CD4-positive, alpha-beta memory T cell (primary cell): ENCODE measurements at regions of chr14 and their contacts with region 1.

Region 1: GRCh38 chr14:24195191-24196070 is at the start of gene TM9SF1:
- DNase-seq: peak; percentile 89 to 92 (median 92)
- H3K4me3 ChIP-seq: peak within 1 kb of the TSS; percentile 87 to 90
- H3K4me3 Mint-ChIP-seq: peak within 1 kb of the TSS; percentile 93 to 98 (median 94)
- H3K27ac ChIP-seq: peak within 1 kb of the TSS; percentile 98
- H3K27ac Mint-ChIP-seq: peak within 1 kb of the TSS; percentile 92 to 99 (median 98)
- H3K4me1 ChIP-seq: peaks cover 37% of the 10 kb centered on the region
- H3K4me1 Mint-ChIP-seq: peaks cover 31 to 65% (median 48%) of the 10 kb centered on the region in 4 donors
- H3K27me3 ChIP-seq: no peaks in the 10 kb centered on the region
- H3K27me3 Mint-ChIP-seq: no peaks in the 10 kb centered on the region
- total RNA-seq, gene TM9SF1: 24.1 to 26.3 TPM

Region 2: DNA sequence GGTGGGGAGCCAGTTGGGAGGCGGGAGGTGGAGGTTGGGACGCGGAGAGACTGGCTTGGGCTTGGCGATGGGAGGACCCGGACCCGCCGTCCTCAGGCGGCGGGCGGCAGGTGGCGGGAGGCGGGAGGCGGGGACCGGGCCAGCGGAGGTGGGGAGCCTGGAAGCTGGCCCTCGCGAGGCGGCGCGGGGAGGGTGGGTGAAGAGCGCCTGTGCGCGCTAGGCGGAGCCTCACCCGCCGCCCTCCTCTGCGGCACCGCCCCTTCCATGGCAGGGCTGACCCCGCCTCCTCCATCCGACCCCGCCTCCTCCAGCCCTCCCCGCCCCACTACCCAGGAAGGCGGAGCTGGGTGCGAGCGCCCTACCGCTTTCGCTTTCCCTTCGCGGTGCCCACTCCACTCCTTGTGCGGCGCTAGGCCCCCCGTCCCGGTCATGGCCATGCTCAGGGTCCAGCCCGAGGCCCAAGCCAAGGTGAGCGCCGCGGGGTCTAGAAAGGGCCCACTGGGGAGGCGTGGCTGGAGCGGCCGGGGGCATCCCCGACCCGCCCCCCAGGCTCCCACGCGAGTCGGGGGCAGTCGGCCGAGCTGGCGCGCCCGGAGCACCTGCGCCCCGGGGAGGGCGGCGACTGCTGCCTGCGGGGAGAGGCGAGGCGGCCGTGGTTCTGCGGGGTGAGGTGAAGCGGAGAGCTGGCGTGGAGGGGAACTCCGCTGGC is 59.4 kb before region 1 on chr14 and contains the start of gene PSME1:
- CTCF ChIA-PET with region 1: interaction called, 3 read pairs
- POLR2A ChIA-PET with region 1: interaction called, 26 read pairs
- intact Hi-C with region 1: no loop called
- DNase-seq: peak; percentile 92 to 94 (median 93)
- H3K4me3 ChIP-seq: peak within 1 kb of the TSS; percentile 30 to 87
- H3K4me3 Mint-ChIP-seq: peak within 1 kb of the TSS; percentile 87 to 94 (median 92)
- H3K27ac ChIP-seq: peak within 1 kb of the TSS; percentile 84
- H3K27ac Mint-ChIP-seq: peak within 1 kb of the TSS; percentile 88 to 96 (median 94)
- H3K4me1 ChIP-seq: peaks cover 59% of the 10 kb centered on the region
- H3K4me1 Mint-ChIP-seq: peaks cover 35 to 70% (median 55%) of the 10 kb centered on the region in 4 donors
- H3K27me3 ChIP-seq: no peaks in the 10 kb centered on the region
- H3K27me3 Mint-ChIP-seq: no peaks in the 10 kb centered on the region
- total RNA-seq, gene PSME1: 257 to 273 TPM

Region 3: GRCh38 chr14:24207104-24207551 is 11.7 kb after region 1 on chr14:
- CTCF ChIA-PET with region 1: interaction called, 5 read pairs
- POLR2A ChIA-PET with region 1: interaction called, 107 read pairs
- intact Hi-C with region 1: no loop called
- DNase-seq: no peak
- H3K4me3 ChIP-seq: no peak overlapping the region
- H3K4me3 Mint-ChIP-seq: no peak overlapping the region
- H3K27ac ChIP-seq: no peak overlapping the region
- H3K27ac Mint-ChIP-seq: peak overlapping the region in 6 of 7 donors; percentile 16 to 82 (median 42)
- H3K4me1 ChIP-seq: peaks cover 11% of the 10 kb centered on the region
- H3K4me1 Mint-ChIP-seq: peaks cover 18 to 50% (median 34%) of the 10 kb centered on the region in 4 donors
- H3K27me3 ChIP-seq: no peaks in the 10 kb centered on the region
- H3K27me3 Mint-ChIP-seq: no peaks in the 10 kb centered on the region

Region 4: DNA sequence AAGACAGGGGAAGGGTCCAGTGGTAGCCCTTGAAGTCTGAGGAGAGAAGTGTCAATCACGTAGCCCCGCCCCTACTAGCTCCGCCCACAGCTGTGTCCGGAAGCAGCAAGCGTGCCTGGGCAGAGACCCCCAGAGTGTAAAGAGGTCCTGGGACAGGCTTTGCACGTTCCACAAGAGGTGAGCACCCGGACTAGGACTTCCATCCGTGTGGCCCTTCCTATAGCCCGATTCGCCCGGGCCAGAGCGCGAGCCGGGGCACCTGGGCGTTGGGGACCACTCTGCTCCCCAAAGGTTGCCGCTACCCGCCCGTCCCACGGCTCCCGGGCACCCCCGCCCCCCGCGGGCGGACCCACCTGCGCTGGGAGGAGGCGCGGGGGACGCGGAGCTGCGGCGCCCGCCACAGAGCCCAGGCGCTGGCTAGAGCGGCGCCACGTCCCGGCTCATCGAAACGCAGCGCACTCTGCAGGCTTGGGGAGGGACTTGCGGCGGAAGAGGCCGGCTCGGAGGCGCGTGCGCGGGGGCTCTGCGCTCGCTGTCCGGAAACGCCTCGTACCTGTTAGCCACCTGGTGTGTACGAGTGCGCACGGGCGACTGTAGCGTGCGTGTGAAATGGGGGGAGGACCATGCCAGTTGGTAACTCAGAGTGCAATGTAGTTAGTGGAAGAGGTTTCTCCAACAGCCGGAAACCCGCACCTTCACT is 75.9 kb after region 1 on chr14 and contains the start of gene RABGGTA:
- CTCF ChIA-PET with region 1: no interaction called
- POLR2A ChIA-PET with region 1: interaction called, 21 read pairs
- intact Hi-C with region 1: loop called (anchors 2 kb)
- DNase-seq: peak; percentile 95 to 98 (median 97)
- H3K4me3 ChIP-seq: peak within 1 kb of the TSS; percentile 86 to 91
- H3K4me3 Mint-ChIP-seq: peak within 1 kb of the TSS; percentile 90 to 95 (median 91)
- H3K27ac ChIP-seq: peak within 1 kb of the TSS; percentile 94
- H3K27ac Mint-ChIP-seq: peak within 1 kb of the TSS; percentile 91 to 100 (median 99)
- H3K4me1 ChIP-seq: peaks cover 33% of the 10 kb centered on the region
- H3K4me1 Mint-ChIP-seq: peaks cover 24 to 46% (median 39%) of the 10 kb centered on the region in 4 donors
- H3K27me3 ChIP-seq: no peaks in the 10 kb centered on the region
- H3K27me3 Mint-ChIP-seq: no peaks in the 10 kb centered on the region
- total RNA-seq, gene RABGGTA: 55.6 to 62.5 TPM